HepG2 (cell line): ENCODE measurements at regions of chr4 and their contacts with region 1.

Region 1: GRCh38 chr4:12852338-12853307 is 631.5 kb downstream of the RAB28 start:
- DNase-seq: peak; percentile 76
- ATAC-seq: peak; percentile 98
- H3K4me3 ChIP-seq: peak overlapping the region in 2 of 3 experiments; percentile 11 to 17; a peak in 1 of 6 replicates
- H3K27ac ChIP-seq: peak overlapping the region; percentile 13
- H3K4me1 ChIP-seq: peaks cover 16% of the 10 kb centered on the region
- H3K27me3 ChIP-seq: no peaks in the 10 kb centered on the region
- CTCF ChIP-seq: peak; percentile 83
- EP300 ChIP-seq: no peak
- POLR2A ChIP-seq: no peak
- RAD21 ChIP-seq: peak; percentile 87

Region 2: GRCh38 chr4:12949719-12950490 is 97.3 kb after region 1 on chr4:
- CTCF ChIA-PET with region 1: no interaction called
- POLR2A ChIA-PET with region 1: no interaction called
- in situ Hi-C with region 1: no loop called
- intact Hi-C with region 1: loop called (anchors 10 kb)
- DNase-seq: peak; percentile 84
- ATAC-seq: peak; percentile 98
- H3K4me3 ChIP-seq: no peak overlapping the region
- H3K27ac ChIP-seq: peak overlapping the region; percentile 7
- H3K4me1 ChIP-seq: peaks cover 39% of the 10 kb centered on the region
- H3K27me3 ChIP-seq: no peaks in the 10 kb centered on the region; a peak in 1 of 5 replicates
- CTCF ChIP-seq: no peak
- EP300 ChIP-seq: peak; percentile 41 to 88; a peak in 2 of 4 replicates
- POLR2A ChIP-seq: no peak
- RAD21 ChIP-seq: no peak

Region 3: DNA sequence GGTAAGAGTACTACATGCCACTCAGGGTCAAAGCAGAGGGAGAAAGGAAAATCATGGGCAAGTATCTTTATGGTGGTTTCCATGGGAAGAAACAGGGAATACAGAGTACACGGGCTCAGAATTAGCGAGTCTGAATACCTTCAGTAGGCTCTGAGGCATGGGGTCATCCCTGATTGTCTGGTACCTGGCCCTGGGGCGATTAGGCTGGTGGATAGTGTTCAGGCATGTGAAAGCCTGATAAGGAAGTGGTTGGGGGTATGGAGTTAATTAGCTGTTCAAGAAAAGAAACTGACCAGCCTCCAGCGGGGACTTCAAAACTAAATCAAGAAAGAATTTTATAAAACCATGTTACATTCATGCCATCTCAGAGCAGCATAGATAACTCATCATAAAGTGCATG is 112.7 kb after region 1 on chr4:
- CTCF ChIA-PET with region 1: no interaction called
- POLR2A ChIA-PET with region 1: no interaction called
- in situ Hi-C with region 1: no loop called
- intact Hi-C with region 1: no loop called
- DNase-seq: no peak
- ATAC-seq: no peak
- H3K4me3 ChIP-seq: no peak overlapping the region
- H3K27ac ChIP-seq: no peak overlapping the region
- H3K4me1 ChIP-seq: peaks cover 38% of the 10 kb centered on the region
- H3K27me3 ChIP-seq: no peaks in the 10 kb centered on the region
- CTCF ChIP-seq: no peak
- EP300 ChIP-seq: no peak
- POLR2A ChIP-seq: no peak
- RAD21 ChIP-seq: no peak

Region 4: DNA sequence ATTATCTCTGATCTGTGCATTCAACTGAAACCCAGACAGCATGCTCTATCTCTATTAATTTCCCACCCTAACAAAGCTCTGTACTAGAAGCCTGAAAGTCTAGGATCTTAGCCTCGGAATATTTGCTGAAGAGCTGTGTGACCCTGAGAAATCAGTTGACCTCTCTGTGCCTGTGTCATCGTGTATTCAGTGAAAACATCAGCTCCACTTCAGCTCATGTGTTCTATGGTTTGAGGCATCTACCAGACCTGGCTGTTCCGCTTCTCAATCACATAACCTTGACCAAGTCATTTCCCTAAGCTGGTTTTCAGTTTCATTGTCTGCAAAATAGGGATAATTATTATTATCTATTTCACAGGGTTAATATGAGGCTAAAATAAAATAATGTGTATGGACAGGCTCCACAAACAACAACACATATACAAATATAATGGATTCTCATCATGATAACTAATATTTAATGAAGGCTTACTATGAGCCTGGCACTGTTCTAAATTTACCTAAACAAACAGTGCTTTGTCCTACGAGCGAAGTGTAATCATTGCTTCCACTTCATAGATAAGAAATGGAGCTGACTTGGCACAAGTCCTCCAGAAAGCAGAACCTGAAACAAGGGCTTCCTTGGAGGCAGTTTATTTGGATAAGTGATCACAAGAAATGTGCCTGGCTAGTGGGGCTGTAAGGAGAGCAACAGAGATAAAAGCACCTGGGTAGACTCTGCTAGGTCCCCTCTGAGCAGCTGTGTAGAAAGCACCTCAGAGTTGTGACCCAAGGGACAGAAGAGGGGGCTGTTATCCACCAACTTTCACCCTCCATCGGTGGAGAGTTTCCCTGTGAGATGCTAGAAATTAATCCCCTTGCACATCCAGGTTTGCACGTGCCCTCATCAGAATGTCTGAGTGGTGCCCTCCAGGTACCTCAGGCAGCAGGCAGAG is 274.6 kb after region 1 on chr4:
- CTCF ChIA-PET with region 1: no interaction called
- POLR2A ChIA-PET with region 1: no interaction called
- in situ Hi-C with region 1: no loop called
- intact Hi-C with region 1: loop called (anchors 10 kb)
- DNase-seq: no peak
- ATAC-seq: peak; percentile 55
- H3K4me3 ChIP-seq: no peak overlapping the region
- H3K27ac ChIP-seq: no peak overlapping the region
- H3K4me1 ChIP-seq: peaks cover 12% of the 10 kb centered on the region; the same call in 1 of the 2 replicates
- H3K27me3 ChIP-seq: no peaks in the 10 kb centered on the region; a peak in 1 of 5 replicates
- CTCF ChIP-seq: peak; percentile 30
- EP300 ChIP-seq: no peak
- POLR2A ChIP-seq: no peak
- RAD21 ChIP-seq: no peak

Region 5: DNA sequence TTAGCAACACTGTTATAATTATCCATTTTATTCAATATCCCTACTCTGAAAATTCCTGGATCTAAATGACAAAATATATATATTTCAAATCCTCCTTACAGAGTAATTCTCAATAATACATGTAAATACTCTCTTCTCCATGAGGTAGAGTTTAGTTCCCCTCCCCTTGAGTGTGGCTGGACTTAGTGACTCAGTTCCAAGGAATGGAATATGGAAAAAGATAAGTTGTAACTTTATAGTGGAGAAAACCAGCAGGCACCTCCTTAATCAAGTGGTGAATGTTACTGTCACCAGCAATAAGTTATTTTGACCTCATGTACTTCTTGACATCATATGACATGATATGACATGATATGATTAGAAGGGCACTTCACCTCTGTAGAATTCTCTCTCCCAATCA is 329.5 kb after region 1 on chr4:
- CTCF ChIA-PET with region 1: no interaction called
- POLR2A ChIA-PET with region 1: no interaction called
- in situ Hi-C with region 1: no loop called
- intact Hi-C with region 1: loop called (anchors 5 kb)
- DNase-seq: no peak
- ATAC-seq: no peak
- H3K4me3 ChIP-seq: no peak overlapping the region
- H3K27ac ChIP-seq: no peak overlapping the region
- H3K4me1 ChIP-seq: no peaks in the 10 kb centered on the region; the same call in 1 of the 2 replicates
- H3K27me3 ChIP-seq: no peaks in the 10 kb centered on the region
- CTCF ChIP-seq: no peak
- EP300 ChIP-seq: no peak
- POLR2A ChIP-seq: no peak
- RAD21 ChIP-seq: no peak

Region 6: GRCh38 chr4:13298655-13299054 is 446.0 kb after region 1 on chr4:
- CTCF ChIA-PET with region 1: no interaction called
- POLR2A ChIA-PET with region 1: no interaction called
- in situ Hi-C with region 1: no loop called
- intact Hi-C with region 1: loop called (anchors 1 kb)
- DNase-seq: peak; percentile 40
- ATAC-seq: peak; percentile 64
- H3K4me3 ChIP-seq: no peak overlapping the region
- H3K27ac ChIP-seq: peak overlapping the region; percentile 24
- H3K4me1 ChIP-seq: peaks cover 26% of the 10 kb centered on the region
- H3K27me3 ChIP-seq: no peaks in the 10 kb centered on the region
- CTCF ChIP-seq: peak; percentile 55
- EP300 ChIP-seq: no peak
- POLR2A ChIP-seq: no peak
- RAD21 ChIP-seq: no peak

Region 7: DNA sequence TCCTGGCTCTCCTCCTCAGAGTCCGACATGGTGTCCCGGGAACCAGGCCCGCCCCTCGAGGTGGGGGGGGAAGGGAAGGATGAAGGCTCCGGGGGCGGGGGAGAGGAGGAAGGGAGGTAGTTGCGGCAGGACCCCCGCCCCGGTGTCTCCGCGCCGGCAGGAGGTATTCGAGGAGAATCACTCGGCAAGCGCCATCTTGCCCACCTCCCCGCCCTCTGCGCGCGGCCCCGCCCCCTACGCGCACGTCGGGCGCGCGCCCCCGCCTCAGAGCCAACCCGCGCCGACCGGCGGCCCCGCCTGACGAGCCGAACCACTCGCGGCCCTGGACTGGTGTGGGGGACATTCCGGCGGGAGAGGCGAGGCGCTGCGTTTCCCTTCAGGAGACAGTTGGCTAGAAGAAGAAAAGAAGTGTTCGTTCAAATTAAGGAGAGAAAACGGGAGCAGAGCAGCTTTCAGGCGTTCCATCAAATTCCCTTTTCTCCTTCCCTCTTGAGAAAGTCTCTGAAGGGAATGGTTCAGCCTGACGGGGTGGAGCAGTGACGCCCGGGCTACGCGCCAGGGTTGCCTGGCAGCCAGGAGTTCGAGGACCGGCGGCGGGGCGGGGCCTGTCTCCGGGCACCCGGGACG is 631.6 kb after region 1 on chr4 and contains the start of gene RAB28:
- CTCF ChIA-PET with region 1: no interaction called
- POLR2A ChIA-PET with region 1: interaction called, 3 read pairs
- in situ Hi-C with region 1: no loop called
- intact Hi-C with region 1: loop called (anchors 2 kb)
- DNase-seq: peak; percentile 83
- ATAC-seq: peak; percentile 96
- H3K4me3 ChIP-seq: peak within 1 kb of the TSS; percentile 78 to 94 (median 85)
- H3K27ac ChIP-seq: peak within 1 kb of the TSS; percentile 75
- H3K4me1 ChIP-seq: peaks cover 22% of the 10 kb centered on the region
- H3K27me3 ChIP-seq: no peaks in the 10 kb centered on the region; a peak in 1 of 5 replicates
- CTCF ChIP-seq: no peak
- EP300 ChIP-seq: no peak
- POLR2A ChIP-seq: peak; percentile 46 to 66; a peak in 3 of 4 replicates
- RAD21 ChIP-seq: no peak
- total RNA-seq, gene RAB28: 18.2 and 20.9 TPM in 2 replicates